ENCODE measurements at regions of chr16 and their contacts with region 1.

Region 1: GRCh38 chr16:67311607-67312488 is 14.7 kb downstream of the KCTD19 start:
- DNase-seq: peak; percentile 92
- H3K4me3 ChIP-seq: no peak overlapping the region
- H3K27ac ChIP-seq: peak overlapping the region; percentile 72
- H3K4me1 ChIP-seq: peaks cover 12% of the 10 kb centered on the region
- H3K27me3 ChIP-seq: no peaks in the 10 kb centered on the region
- CTCF ChIP-seq: no peak
- POLR2A ChIP-seq: peak; percentile 36

Region 2: DNA sequence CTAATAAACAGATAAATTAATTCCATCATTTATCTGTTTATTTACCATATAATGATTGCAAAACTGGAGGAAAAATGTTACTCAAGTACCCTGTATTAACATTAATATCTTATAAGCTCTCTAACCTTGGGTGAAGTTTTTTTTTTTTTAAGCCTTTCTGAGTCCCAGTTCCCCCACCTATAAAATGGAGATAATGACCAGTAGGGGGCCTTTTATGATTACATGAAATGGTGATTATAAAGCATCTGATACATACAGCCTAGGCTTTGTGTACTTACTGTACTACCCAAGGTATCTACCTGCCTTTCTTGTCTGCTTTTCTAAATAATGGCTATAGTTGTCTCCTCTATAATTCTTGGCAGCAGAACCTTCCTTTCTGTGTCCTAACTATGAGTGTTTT is 37.3 kb after region 1 on chr16:
- CTCF ChIA-PET with region 1: interaction called, 4 read pairs
- POLR2A ChIA-PET with region 1: no interaction called
- dilution Hi-C with region 1: no loop called
- intact Hi-C with region 1: loop called (anchors 1 kb)
- DNase-seq: peak; percentile 59
- H3K4me3 ChIP-seq: no peak overlapping the region
- H3K27ac ChIP-seq: no peak overlapping the region
- H3K4me1 ChIP-seq: peaks cover 23% of the 10 kb centered on the region
- H3K27me3 ChIP-seq: no peaks in the 10 kb centered on the region
- CTCF ChIP-seq: peak; percentile 32 to 49
- POLR2A ChIP-seq: no peak

Region 3: DNA sequence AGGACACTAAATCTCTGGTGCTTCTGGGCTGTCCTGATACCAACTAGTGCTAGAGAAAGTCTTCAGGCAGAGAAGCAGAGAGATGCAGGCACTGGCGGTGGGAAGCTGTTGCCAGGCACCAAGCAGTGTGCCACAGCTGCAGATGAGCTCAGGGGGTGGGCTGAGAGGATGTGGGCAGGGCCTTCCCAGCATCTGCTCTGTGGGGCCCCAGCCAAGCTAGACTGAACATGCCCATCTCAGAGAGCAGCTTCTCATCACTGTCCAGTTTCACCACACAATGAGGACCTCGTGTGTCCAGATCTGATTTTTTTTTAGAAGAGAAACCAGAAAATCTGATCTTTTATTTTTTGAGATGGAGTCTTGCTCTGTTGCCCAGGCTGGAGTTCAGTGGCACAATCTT is 598.3 kb after region 1 on chr16:
- CTCF ChIA-PET with region 1: no interaction called
- POLR2A ChIA-PET with region 1: no interaction called
- dilution Hi-C with region 1: no loop called
- intact Hi-C with region 1: loop called (anchors 10 kb)
- DNase-seq: no peak
- H3K4me3 ChIP-seq: no peak overlapping the region
- H3K27ac ChIP-seq: no peak overlapping the region
- H3K4me1 ChIP-seq: no peaks in the 10 kb centered on the region
- H3K27me3 ChIP-seq: no peaks in the 10 kb centered on the region
- CTCF ChIP-seq: no peak
- POLR2A ChIP-seq: no peak